Heart left ventricle (tissue), 16 donors: ENCODE measurements at regions of chr16 and their contacts with region 1.

Region 1: GRCh38 chr16:3123986-3124886 is 10.6 kb upstream of the ZNF213 start:
- DNase-seq: peak; percentile 96 to 97 (median 97)
- ATAC-seq: peak; percentile 96 to 98 (median 98)
- H3K4me3 ChIP-seq: peak overlapping the region; percentile 58 to 91 (median 66)
- H3K27ac ChIP-seq: peak overlapping the region; percentile 14 to 91 (median 74)
- H3K4me1 ChIP-seq: peaks cover 0 to 47% (median 22%) of the 10 kb centered on the region in 12 donors
- H3K27me3 ChIP-seq: no peaks in the 10 kb centered on the region
- CTCF ChIP-seq: peak in 6 of 12 donors; percentile 22 to 42 (median 26)
- POLR2A ChIP-seq: no peak

Region 2: DNA sequence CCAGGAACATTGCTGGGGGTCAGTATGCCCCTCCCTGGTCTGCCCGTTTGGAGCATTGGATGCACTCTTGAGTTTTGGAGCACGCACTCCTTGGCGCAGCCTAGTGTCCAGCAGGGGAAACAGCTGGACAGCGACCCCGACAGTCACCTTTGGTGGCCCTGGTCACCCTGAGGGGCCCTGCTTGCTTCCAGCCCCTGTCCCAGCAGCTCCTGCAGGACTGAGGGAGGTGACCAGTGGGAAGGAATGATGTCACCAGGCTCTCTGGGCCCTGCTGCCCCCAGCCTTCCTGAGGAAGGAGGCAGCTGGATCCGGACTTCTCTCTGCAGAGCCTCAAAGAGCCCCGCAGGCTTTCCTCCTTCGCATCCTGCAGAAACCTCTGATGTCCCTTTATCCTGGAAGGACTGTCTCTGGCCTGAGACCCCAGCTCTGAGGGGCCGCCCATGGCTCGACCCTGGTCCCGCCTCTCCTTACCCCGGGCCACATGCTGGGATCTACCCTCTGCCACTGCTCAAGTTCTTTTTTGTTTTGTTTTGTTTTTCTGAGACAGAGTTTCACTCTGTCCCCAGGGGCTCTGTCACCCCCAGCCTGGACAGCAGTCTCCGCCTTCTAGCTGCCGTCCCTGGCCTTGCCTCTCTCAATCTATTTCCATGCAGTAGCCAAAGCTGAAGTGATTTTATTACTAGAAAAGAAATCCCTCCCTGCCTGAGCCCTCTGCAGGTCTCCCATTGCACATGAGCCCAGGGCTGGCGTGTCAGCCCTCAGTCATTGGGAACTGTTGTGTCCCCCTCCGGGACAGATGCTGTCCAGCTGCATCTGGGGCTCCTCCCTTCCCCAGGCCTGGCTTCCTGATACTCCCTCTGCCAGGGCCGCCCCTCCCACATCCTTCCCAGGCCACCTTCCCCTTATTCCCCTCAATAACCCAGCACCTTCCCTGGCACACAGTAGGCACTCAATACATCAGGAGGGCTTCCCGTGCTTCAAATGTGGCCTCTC is 36.7 kb before region 1 on chr16:
- intact Hi-C with region 1: loop called in 4 of 10 experiments (anchors 5 kb)
- DNase-seq: peak; percentile 59 to 84 (median 66)
- ATAC-seq: peak; percentile 72 to 90 (median 74)
- H3K4me3 ChIP-seq: peak overlapping the region in 11 of 12 donors; percentile 14 to 63 (median 51)
- H3K27ac ChIP-seq: peak overlapping the region; percentile 59 to 94 (median 86)
- H3K4me1 ChIP-seq: peaks cover 4 to 43% (median 19%) of the 10 kb centered on the region in 12 donors
- H3K27me3 ChIP-seq: peaks cover 0 to 7% (median 0%) of the 10 kb centered on the region in 9 donors
- CTCF ChIP-seq: peak in 8 of 12 donors; percentile 11 to 45 (median 28)
- POLR2A ChIP-seq: peak in 1 of 2 donors; percentile 13

Region 3: DNA sequence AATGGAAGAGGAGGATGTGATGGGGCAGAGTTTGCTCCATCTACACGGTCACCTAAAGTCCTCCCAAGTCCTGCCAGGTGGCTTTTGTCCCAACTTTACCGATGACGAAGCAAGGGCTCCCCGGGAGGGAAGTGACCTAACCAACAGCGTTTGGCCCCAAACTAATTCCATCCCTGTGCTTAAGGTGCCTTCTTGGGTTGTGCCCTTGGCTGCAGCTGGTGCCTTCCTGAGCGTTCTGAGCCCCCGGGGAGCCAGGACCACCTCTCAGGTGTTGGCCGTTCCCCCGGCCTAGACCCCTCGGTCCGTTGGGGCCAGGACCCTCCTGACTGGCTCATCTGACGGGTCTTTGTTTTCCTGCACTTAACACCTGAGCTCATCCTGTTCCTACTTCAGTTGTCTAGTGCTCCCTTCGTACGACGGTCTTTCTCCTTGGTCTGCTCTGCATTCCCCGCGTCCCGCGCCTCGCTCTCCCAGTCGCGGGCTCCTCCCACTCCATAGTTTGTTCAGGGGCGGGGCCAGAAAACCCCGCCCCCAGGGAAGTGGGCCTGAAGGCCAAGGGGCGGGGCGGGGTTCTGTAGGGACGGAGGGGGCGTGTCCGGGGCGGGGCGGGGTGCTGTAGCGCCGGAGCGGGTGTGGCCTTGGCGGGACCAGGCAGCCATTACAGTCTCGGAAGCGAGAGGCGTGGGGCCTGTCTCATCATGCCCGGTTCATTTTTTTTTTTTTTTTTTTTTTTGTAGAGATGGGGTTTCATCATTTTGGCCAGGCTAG is 24.3 kb before region 1 on chr16:
- intact Hi-C with region 1: loop called in 1 of 10 experiments (anchors 1 kb)
- DNase-seq: peak; percentile 92 to 96 (median 93)
- ATAC-seq: peak; percentile 76 to 96 (median 94)
- H3K4me3 ChIP-seq: peak overlapping the region in 9 of 12 donors; percentile 17 to 40 (median 31)
- H3K27ac ChIP-seq: peak overlapping the region in 9 of 12 donors; percentile 55 to 91 (median 80)
- H3K4me1 ChIP-seq: peaks cover 9 to 48% (median 23%) of the 10 kb centered on the region in 12 donors
- H3K27me3 ChIP-seq: no peaks in the 10 kb centered on the region
- CTCF ChIP-seq: no peak
- POLR2A ChIP-seq: peak in 1 of 2 donors; percentile 9

Region 4: DNA sequence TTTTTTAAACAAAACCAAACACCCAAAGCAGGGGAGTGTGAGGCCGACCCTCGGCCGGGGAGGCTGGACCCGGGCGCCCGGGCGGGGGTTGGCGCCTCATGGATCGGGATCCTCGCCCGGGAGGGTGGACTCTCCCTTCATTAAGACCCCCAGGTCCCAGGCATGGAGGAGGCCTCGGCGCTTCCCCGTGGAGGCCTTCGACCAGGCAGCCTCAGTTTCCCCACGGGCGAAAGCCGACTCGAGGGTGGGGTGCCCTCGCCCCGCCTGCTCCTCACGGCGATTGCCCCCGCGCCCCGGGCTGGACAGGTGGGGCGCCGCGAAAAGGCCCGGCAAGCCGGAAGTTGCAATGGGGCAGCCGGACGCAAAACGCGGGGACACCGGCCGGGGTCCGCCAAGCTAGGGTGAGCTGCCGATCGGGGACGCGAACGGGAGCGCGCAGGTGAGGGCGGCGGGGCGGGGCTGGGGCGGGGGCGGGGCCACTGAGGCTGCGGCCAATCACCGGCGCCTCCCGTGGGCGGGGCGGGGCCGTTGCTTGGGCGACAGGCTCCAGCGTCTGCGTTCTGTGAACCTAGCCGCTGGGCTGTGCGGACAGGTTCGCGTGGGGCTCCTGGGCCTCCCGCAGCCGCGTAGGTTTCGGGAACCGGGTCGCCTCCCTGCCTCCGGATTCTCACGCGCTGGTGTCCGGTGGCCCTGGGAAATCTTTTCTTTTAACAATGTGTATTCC is 17.9 kb before region 1 on chr16:
- intact Hi-C with region 1: loop called in 2 of 10 experiments (anchors 2 kb)
- DNase-seq: peak; percentile 91 to 94 (median 92)
- ATAC-seq: peak; percentile 86 to 97 (median 95)
- H3K4me3 ChIP-seq: peak overlapping the region; percentile 48 to 79 (median 67)
- H3K27ac ChIP-seq: peak overlapping the region; percentile 73 to 93 (median 86)
- H3K4me1 ChIP-seq: peaks cover 4 to 33% (median 16%) of the 10 kb centered on the region in 12 donors
- H3K27me3 ChIP-seq: no peaks in the 10 kb centered on the region
- CTCF ChIP-seq: peak in 1 of 12 donors; percentile 14
- POLR2A ChIP-seq: peak in 1 of 2 donors; percentile 46